Endothelial cell of umbilical vein (primary cell): ENCODE measurements at regions of chr7 and their contacts with region 1.

Region 1: GRCh38 chr7:80428161-80429054 is 83.5 kb downstream of the GNAT3 start:
- DNase-seq: peak; percentile 63
- H3K4me3 ChIP-seq: no peak overlapping the region
- H3K27ac ChIP-seq: no peak overlapping the region
- H3K4me1 ChIP-seq: no peaks in the 10 kb centered on the region
- H3K27me3 ChIP-seq: no peaks in the 10 kb centered on the region
- CTCF ChIP-seq: peak; percentile 16 to 32
- POLR2A ChIP-seq: no peak

Region 2: GRCh38 chr7:80335511-80336231 is 92.7 kb before region 1 on chr7:
- CTCF ChIA-PET with region 1: no interaction called
- POLR2A ChIA-PET with region 1: no interaction called
- dilution Hi-C with region 1: no loop called
- intact Hi-C with region 1: no loop called
- DNase-seq: peak; percentile 83
- H3K4me3 ChIP-seq: no peak overlapping the region
- H3K27ac ChIP-seq: no peak overlapping the region
- H3K4me1 ChIP-seq: peaks cover 10% of the 10 kb centered on the region
- H3K27me3 ChIP-seq: no peaks in the 10 kb centered on the region
- CTCF ChIP-seq: no peak
- POLR2A ChIP-seq: no peak

Region 3: DNA sequence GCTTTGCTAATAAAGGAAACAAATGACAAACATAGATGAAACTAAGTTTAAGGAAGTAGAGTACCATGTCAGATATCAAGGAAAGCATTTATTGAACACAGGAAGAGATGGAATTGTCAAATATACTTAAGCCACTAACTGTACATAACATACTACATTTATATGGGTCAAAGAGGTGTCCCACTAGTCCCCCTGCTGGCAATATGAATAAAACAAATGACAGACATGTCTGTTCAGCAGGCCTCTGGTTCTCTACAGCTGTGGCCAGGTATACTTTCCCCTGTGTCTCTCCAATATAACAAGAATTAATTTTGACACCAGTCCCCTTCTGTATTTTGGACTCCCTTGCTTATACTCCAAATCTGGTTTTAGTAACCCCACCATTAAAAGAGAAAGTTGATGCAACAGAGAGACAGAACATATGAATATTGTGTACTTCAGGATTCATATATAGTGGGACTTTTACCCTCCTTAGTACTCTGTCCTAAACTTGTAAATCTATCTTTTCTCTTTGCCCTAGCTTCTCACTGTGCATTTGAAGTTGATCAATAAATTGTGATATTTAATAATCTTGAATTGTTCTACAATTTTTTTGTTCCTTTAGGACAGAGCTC is 253.0 kb after region 1 on chr7:
- CTCF ChIA-PET with region 1: interaction called, 19 read pairs
- POLR2A ChIA-PET with region 1: no interaction called
- dilution Hi-C with region 1: no loop called
- intact Hi-C with region 1: loop called (anchors 1 kb)
- DNase-seq: peak; percentile 42
- H3K4me3 ChIP-seq: no peak overlapping the region
- H3K27ac ChIP-seq: no peak overlapping the region
- H3K4me1 ChIP-seq: no peaks in the 10 kb centered on the region
- H3K27me3 ChIP-seq: no peaks in the 10 kb centered on the region
- CTCF ChIP-seq: peak; percentile 18 to 47
- POLR2A ChIP-seq: no peak

Region 4: DNA sequence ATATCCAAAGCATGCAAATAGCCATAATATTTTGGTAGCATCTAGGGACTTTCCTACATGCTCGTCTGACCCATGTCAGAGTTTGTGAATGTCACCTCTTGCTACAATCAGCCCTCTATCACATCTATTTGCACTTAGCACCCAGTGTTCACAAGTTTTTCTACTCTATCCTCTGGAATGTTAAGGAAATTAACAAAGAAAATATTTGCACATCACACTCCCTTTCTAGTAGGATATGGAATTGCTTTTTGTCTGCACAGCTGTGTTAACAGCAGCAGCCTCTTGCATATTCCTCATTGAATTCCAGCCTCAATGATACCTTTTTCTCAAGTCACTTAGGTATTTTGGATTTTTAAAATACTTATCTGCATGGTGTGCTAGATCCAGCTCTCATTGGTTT is 893.5 kb after region 1 on chr7:
- CTCF ChIA-PET with region 1: no interaction called
- POLR2A ChIA-PET with region 1: no interaction called
- dilution Hi-C with region 1: no loop called
- intact Hi-C with region 1: no loop called
- DNase-seq: no peak
- H3K4me3 ChIP-seq: no peak overlapping the region
- H3K27ac ChIP-seq: no peak overlapping the region
- H3K4me1 ChIP-seq: peaks cover under 1% of the 10 kb centered on the region
- H3K27me3 ChIP-seq: no peaks in the 10 kb centered on the region
- CTCF ChIP-seq: no peak
- POLR2A ChIP-seq: no peak